Aorta (tissue), 5 donors: ENCODE measurements at regions of chr18 and their contacts with region 1.

Region 1: GRCh38 chr18:28065031-28065792 is 111.7 kb downstream of the CDH2 start:
- DNase-seq: no peak
- ATAC-seq: no peak
- H3K4me3 ChIP-seq: no peak overlapping the region
- H3K27ac ChIP-seq: peak overlapping the region in 1 of 2 donors; percentile 17
- H3K4me1 ChIP-seq: peaks cover 3% of the 10 kb centered on the region in 2 donors
- H3K27me3 ChIP-seq: no peaks in the 10 kb centered on the region

Region 2: DNA sequence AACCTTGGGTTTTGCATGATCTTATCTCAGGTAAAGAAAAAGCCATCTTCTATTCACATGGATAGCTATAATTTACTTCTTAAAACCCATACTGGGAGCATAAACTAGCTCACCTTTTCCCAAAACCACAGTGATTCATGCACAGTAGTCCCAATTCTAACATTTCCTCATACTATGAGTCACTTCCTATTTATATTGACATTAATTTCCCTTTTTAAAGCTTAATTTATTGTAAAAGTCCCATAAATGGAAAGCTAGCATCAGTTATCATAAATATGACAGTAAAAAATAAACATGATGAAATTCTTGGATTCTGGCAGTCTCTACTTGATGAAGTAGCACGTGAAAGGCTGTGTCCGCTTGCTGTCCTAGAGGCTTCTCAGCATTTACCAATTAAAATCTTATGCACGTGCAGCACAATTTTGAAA is 68.4 kb before region 1 on chr18:
- intact Hi-C with region 1: loop called in 1 of 2 experiments (anchors 10 kb)
- DNase-seq: no peak
- ATAC-seq: no peak
- H3K4me3 ChIP-seq: no peak overlapping the region
- H3K27ac ChIP-seq: no peak overlapping the region
- H3K4me1 ChIP-seq: peaks cover 0 to 3% of the 10 kb centered on the region in 2 donors
- H3K27me3 ChIP-seq: no peaks in the 10 kb centered on the region

Region 3: GRCh38 chr18:28594034-28594433 is 528.8 kb after region 1 on chr18:
- intact Hi-C with region 1: no loop called
- DNase-seq: no peak
- ATAC-seq: no peak
- H3K4me3 ChIP-seq: no peak overlapping the region
- H3K27ac ChIP-seq: no peak overlapping the region
- H3K4me1 ChIP-seq: no peaks in the 10 kb centered on the region
- H3K27me3 ChIP-seq: no peaks in the 10 kb centered on the region